ENCODE measurements at regions of chr12 and their contacts with region 1.

Region 1: GRCh38 chr12:92928962-92929915 is at the start of gene EEA1:
- DNase-seq: peak; percentile 93
- H3K4me3 Mint-ChIP-seq: peak within 1 kb of the TSS; percentile 88
- H3K27ac Mint-ChIP-seq: peak within 1 kb of the TSS; percentile 95
- H3K4me1 Mint-ChIP-seq: peaks cover 27% of the 10 kb centered on the region
- H3K27me3 Mint-ChIP-seq: peaks cover 2% of the 10 kb centered on the region
- total RNA-seq, gene EEA1: 30.5 and 31.9 TPM in 2 replicates

Region 2: DNA sequence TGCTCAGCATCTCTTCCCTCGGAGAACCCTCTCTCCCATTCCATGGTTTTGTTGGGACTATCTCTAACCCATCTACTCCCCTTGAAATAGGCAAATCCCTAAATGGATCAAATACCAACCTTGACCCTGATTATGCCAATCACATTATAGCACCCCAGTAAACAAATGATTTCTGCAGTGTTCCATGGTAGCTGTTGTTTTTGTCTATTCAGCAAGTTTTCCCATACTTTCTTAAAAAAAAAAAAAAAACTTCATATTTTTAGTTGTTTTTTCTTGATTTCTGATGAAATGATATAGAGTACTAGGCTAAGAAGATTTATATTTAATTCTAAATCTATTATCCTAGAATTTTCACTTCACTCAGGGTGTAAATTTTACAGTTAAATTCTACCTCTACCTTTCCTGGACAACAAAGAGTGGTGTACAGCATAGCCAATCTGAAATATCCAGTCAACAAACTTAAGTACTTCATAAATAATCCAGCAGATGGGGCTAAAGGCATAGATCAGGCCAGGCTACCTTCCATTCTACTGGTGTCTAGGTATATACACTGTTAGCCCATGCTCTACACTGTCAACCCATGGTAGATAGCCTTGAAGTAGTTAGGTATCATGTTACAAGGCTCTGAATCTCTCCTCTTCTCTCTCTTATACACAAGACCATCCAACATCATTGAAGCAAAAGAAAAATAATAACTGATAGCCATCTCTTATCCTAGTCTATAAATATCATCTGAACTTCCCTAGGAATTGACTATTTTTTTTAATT is 144.3 kb before region 1 on chr12:
- intact Hi-C with region 1: loop called (anchors 5 kb)
- DNase-seq: no peak
- H3K4me3 Mint-ChIP-seq: no peak overlapping the region
- H3K27ac Mint-ChIP-seq: no peak overlapping the region
- H3K4me1 Mint-ChIP-seq: peaks cover 1% of the 10 kb centered on the region
- H3K27me3 Mint-ChIP-seq: no peaks in the 10 kb centered on the region

Region 3: GRCh38 chr12:92912052-92912451 is 17.2 kb before region 1 on chr12:
- intact Hi-C with region 1: loop called (anchors 1 kb)
- DNase-seq: no peak
- H3K4me3 Mint-ChIP-seq: peak overlapping the region; percentile 13
- H3K27ac Mint-ChIP-seq: peak overlapping the region; percentile 85
- H3K4me1 Mint-ChIP-seq: peaks cover 38% of the 10 kb centered on the region
- H3K27me3 Mint-ChIP-seq: no peaks in the 10 kb centered on the region

Region 4: GRCh38 chr12:93378373-93379325 is 449.4 kb after region 1 on chr12:
- intact Hi-C with region 1: loop called (anchors 5 kb)
- DNase-seq: peak; percentile 55
- H3K4me3 Mint-ChIP-seq: peak overlapping the region; percentile 100
- H3K27ac Mint-ChIP-seq: peak overlapping the region; percentile 100
- H3K4me1 Mint-ChIP-seq: peaks cover 40% of the 10 kb centered on the region
- H3K27me3 Mint-ChIP-seq: peaks cover 2% of the 10 kb centered on the region

Region 5: GRCh38 chr12:93441617-93442410 is 512.6 kb after region 1 on chr12 and contains the start of gene UBE2N:
- intact Hi-C with region 1: loop called (anchors 5 kb)
- DNase-seq: peak; percentile 94
- H3K4me3 Mint-ChIP-seq: peak within 1 kb of the TSS; percentile 98
- H3K27ac Mint-ChIP-seq: peak within 1 kb of the TSS; percentile 95
- H3K4me1 Mint-ChIP-seq: peaks cover 38% of the 10 kb centered on the region
- H3K27me3 Mint-ChIP-seq: no peaks in the 10 kb centered on the region
- total RNA-seq, gene UBE2N: 258 and 261 TPM in 2 replicates

Region 6: GRCh38 chr12:93785262-93786010 is 856.2 kb after region 1 on chr12:
- intact Hi-C with region 1: loop called (anchors 5 kb)
- DNase-seq: peak; percentile 37
- H3K4me3 Mint-ChIP-seq: peak overlapping the region; percentile 50
- H3K27ac Mint-ChIP-seq: peak overlapping the region; percentile 92
- H3K4me1 Mint-ChIP-seq: peaks cover 55% of the 10 kb centered on the region
- H3K27me3 Mint-ChIP-seq: no peaks in the 10 kb centered on the region

Measured in activated T-helper 2 cell treated with anti-CD3 and anti-CD28 coated beads, Interferon-gamma antibody, Interleukin-2, Interleukin-4, amounts not matched to agents 10 μg/mL and 5 μg/mL and 100 μg/mL, durations not matched to agents 14 hours and 24 hours and 36 hours (primary cell).